ENCODE measurements at regions of chr10 and their contacts with region 1.

Region 1: DNA sequence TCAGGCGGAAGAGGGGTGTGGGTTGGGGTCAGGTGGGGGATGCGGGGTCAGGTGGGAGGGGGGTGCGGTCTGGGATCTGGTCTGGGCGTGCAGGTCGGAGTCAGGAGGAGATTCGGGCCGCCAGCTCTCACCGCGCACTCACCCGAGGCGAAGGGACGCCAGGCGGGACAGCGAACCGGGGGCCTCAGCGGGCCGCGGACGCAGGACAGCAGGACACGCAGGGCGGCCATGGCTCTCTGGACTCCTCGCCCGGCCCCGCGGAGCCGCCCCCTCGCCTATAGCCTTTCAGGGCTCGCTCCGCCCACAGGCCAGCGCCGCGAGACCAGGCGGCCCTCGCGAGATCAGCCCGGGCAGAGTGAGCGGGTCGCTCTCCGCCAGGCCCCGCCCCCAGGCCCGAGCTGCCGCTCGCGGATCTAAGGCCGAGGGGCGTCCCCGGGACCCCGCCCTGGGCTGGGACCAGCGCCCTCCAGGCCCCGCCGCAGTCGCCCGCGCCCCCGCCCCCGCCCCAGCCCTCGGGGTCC is at the start of gene ECHS1:
- DNase-seq: peak; percentile 94
- H3K4me3 ChIP-seq: peak within 1 kb of the TSS; percentile 70 to 85
- H3K27ac ChIP-seq: peak within 1 kb of the TSS; percentile 86 to 89
- H3K4me1 ChIP-seq: peaks cover 4% of the 10 kb centered on the region
- H3K27me3 ChIP-seq: no peaks in the 10 kb centered on the region
- CTCF ChIP-seq: no peak
- POLR2A ChIP-seq: peak; percentile 83
- total RNA-seq, gene ECHS1: 112 to 126 TPM

Region 2: DNA sequence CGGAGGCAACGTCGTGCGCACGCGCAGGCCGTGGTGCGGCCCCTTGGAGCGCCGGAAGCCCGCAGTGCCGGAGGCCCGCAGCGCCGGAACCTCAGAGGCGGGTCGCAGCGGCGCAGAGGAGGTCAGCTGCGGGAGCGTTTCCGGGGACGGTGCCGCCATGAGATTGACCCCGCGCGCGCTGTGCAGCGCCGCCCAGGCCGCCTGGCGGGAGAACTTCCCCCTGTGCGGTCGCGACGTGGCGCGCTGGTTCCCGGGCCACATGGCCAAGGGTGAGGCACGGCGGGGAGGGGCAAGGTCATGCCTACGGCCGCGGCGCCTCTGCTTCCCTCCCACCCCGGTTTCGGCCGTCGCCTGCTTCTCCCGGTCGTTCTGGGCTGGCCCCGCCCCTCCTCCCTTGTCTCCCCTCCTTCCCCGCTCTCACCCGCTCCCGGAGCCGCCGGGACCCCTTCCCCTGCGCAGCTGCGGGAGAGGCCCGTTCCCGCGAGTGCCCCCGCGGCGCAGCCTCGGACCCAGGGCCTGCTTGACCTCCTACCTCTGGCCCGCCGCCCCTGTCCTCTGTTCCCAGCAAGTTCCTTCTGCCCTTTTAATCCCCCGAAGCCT is 21.0 kb after region 1 on chr10 and contains the start of gene MTG1:
- intact Hi-C with region 1: loop called (anchors 2 kb)
- DNase-seq: peak; percentile 89
- H3K4me3 ChIP-seq: peak within 1 kb of the TSS; percentile 80 to 97
- H3K27ac ChIP-seq: peak within 1 kb of the TSS; percentile 64 to 78
- H3K4me1 ChIP-seq: no peaks in the 10 kb centered on the region
- H3K27me3 ChIP-seq: no peaks in the 10 kb centered on the region
- CTCF ChIP-seq: peak in 2 of 4 experiments; percentile 44 to 52
- POLR2A ChIP-seq: peak; percentile 70
- total RNA-seq, gene MTG1: 26.8 to 67.4 TPM